A549 (cell line): ENCODE measurements at regions of chr17 and their contacts with region 1.

Region 1: DNA sequence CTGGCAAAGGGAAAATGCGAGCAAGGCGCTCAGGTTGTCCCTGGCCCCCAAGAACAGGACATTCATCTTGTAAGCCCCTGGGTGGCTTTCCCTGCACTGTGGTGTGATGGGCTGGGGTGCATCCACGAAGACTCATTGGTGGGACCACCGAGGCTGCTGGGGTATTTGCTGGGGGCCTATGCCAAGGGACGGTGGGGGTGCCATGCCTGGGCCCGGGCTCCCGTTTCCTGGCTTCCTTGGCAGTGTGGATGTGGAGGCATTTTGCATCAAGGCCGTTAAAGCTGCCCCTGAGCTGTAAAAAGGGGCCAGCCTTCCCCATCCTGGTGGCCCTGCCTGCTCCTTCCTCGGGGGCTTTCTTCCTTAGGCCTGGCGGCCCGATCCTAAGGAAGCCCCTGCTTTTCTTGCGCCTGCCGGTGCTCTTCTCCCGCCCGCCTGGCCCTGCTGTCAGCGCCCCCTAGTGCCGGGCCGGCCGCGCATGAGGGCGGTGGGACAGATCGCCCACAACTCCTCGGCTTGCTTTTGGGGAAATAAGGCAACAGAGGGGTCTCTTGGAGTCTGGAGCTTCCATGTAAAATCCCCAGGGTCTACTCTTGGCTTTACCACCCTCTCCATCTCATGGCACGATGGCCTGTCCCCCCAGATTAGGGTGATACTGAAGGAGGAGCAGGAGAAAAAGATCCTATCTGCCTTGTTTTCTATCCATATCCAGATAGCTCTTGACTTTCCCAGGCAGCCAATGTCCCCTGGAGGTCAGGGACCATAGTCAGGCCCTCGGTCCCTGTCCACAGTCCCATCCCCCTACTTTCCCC is 9.8 kb upstream of the TBX2 start:
- DNase-seq: peak; percentile 58 to 72
- ATAC-seq: peak; percentile 59 to 88
- H3K4me3 ChIP-seq: no peak overlapping the region
- H3K27ac ChIP-seq: peak overlapping the region; percentile 40 to 75; a peak in 5 of 6 replicates
- H3K4me1 ChIP-seq: peaks cover 7% of the 10 kb centered on the region; the same call in 2 of the 3 replicates
- CTCF ChIP-seq: peak; percentile 97
- EP300 ChIP-seq: no peak
- POLR2A ChIP-seq: no peak
- RAD21 ChIP-seq: peak; percentile 92 to 97

Region 2: DNA sequence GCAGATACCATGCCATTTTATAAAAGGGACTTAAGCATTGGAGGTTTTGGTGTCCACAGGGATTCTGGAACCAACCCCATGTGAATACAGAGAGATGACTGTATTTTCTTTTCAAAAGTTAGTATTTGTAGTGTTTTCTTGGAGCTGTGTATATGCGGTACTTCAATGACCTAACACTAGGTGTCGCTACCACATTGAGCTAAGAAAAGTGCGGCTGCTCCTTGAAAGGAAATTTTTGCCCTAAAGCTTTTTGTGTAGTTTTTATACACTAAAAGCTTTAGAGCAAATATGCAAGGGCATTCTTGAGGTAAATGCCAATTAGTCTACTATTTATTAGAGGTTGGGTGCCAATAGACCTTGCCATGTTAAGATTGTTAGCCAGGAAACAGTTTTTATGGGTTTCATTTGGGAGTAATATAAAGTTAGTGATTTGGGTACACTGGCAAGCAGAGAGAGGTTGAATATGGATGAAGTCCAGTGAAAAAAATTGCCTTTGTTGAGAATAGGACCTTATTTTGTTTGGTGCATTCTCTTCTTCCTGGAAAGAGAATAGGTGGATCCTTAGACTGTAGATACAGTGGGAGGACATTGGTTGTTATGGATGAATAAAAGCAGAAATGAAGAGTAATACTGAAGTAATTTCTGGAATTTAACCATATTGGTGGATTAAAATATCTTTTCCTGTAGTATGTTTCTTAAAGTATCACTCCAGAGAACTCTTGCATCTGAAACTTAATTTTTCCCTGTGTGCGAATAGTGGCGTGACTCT is 668.9 kb before region 1 on chr17:
- CTCF ChIA-PET with region 1: interaction called, 11 read pairs
- POLR2A ChIA-PET with region 1: no interaction called
- DNase-seq: peak; percentile 63 to 74
- ATAC-seq: peak; percentile 73 to 87; a peak in 5 of 6 replicates
- H3K4me3 ChIP-seq: no peak overlapping the region
- H3K27ac ChIP-seq: no peak overlapping the region
- H3K4me1 ChIP-seq: peaks cover 3% of the 10 kb centered on the region; the same call in 1 of the 3 replicates
- CTCF ChIP-seq: peak; percentile 99
- EP300 ChIP-seq: no peak
- POLR2A ChIP-seq: no peak
- RAD21 ChIP-seq: peak; percentile 96 to 97

Region 3: GRCh38 chr17:61002316-61002736 is 387.5 kb before region 1 on chr17:
- CTCF ChIA-PET with region 1: interaction called, 40 read pairs
- POLR2A ChIA-PET with region 1: no interaction called
- DNase-seq: peak; percentile 7 to 63
- ATAC-seq: peak in 1 of 2 experiments; percentile 64; a peak in 3 of 6 replicates
- H3K4me3 ChIP-seq: no peak overlapping the region
- H3K27ac ChIP-seq: no peak overlapping the region
- H3K4me1 ChIP-seq: peaks cover 7% of the 10 kb centered on the region; the same call in 2 of the 3 replicates
- CTCF ChIP-seq: peak; percentile 91
- EP300 ChIP-seq: no peak
- POLR2A ChIP-seq: no peak
- RAD21 ChIP-seq: peak; percentile 91 to 95

Region 4: DNA sequence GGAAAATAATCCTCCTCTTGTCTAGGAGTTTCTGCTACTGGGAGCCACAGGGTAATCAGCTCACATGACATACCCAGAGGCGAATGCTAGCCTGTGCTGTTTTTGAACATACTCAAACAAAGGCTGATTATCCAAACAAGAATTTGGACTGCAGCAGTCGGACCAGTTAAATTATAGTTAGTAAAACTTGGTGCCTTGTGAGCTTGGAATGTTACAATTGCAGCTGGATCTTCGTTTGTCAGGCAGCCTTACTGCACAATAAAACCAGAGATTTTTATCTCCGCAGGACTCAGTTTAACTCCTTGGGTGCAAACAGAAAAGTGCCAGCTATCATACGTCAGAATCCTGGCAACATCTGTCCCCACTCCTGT is 154.1 kb before region 1 on chr17:
- CTCF ChIA-PET with region 1: interaction called, 10 read pairs
- POLR2A ChIA-PET with region 1: interaction called, 4 read pairs
- DNase-seq: no peak
- ATAC-seq: peak in 1 of 2 experiments; percentile 57; a peak in 3 of 6 replicates
- H3K4me3 ChIP-seq: no peak overlapping the region
- H3K27ac ChIP-seq: 0 out of 6 replicates have a peak overlapping the region, but pooled peaks of 1 of the 2 experiments have one; percentile 0
- H3K4me1 ChIP-seq: peaks cover 18% of the 10 kb centered on the region
- CTCF ChIP-seq: no peak
- EP300 ChIP-seq: no peak
- POLR2A ChIP-seq: no peak
- RAD21 ChIP-seq: no peak

Region 5: DNA sequence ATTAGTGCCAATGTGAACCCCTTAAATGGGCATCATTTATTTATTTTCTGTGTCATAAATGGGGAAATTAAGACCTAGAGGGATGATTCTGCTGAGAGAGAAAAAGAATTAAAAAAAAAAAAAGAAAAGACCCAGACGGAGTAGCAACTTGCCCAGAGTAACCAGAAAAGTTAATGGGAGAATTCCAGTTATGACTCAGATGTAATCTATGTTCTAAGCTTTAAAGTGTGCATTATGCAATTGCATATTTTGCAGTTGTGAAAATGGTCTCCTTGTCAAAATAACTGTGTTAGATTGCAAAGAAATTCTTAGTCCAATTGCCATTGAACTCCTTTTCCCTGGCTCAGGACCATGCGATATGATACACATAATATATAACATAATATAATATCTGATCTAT is 28.8 kb before region 1 on chr17:
- CTCF ChIA-PET with region 1: interaction called, 26 read pairs
- POLR2A ChIA-PET with region 1: no interaction called
- DNase-seq: no peak
- ATAC-seq: no peak
- H3K4me3 ChIP-seq: no peak overlapping the region
- H3K27ac ChIP-seq: peak overlapping the region; percentile 58 to 60; a peak in 4 of 6 replicates
- H3K4me1 ChIP-seq: peaks cover 42% of the 10 kb centered on the region
- CTCF ChIP-seq: no peak
- EP300 ChIP-seq: no peak
- POLR2A ChIP-seq: no peak
- RAD21 ChIP-seq: no peak

Region 6: GRCh38 chr17:61538480-61538879 is 148.6 kb after region 1 on chr17:
- CTCF ChIA-PET with region 1: no interaction called
- POLR2A ChIA-PET with region 1: no interaction called
- DNase-seq: no peak
- ATAC-seq: no peak
- H3K4me3 ChIP-seq: no peak overlapping the region
- H3K27ac ChIP-seq: no peak overlapping the region
- H3K4me1 ChIP-seq: no peaks in the 10 kb centered on the region
- CTCF ChIP-seq: no peak
- EP300 ChIP-seq: no peak
- POLR2A ChIP-seq: no peak
- RAD21 ChIP-seq: no peak